IMR-90 (cell line): ENCODE measurements at regions of chr15 and their contacts with region 1.

Region 1: DNA sequence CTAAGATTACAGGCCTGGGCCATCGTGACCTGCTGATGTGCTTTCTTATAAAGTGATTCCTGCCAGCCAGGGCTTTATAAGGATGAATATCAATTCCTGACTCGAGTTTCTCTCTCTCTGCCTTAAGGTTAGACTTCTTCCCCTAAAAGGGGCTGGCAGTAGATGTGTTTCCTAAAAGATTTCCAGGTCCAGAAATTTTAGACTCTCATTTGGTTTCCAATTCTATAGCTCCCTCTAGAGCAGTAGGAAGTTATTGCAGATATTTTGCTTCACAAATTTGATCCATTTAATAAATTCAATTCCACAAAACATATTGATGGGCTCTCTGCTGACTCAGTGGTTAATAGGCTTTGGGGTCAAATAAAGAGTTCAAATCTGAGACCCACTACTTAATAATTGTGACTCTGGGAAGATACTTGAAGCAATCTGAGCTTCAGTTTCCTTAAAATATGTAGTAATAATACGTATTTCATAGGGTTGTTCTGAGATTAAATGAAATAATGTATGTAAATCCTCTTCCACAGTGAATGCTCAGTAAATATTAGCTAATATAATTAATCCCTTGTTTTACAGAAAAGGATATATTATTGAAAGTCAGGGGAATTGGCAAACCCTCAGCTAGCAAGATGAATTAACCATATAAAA is 2.1 kb downstream of the TRIM69 start:
- DNase-seq: peak; percentile 65
- ATAC-seq: peak; percentile 71
- H3K4me3 ChIP-seq: no peak overlapping the region
- H3K27ac ChIP-seq: no peak overlapping the region
- H3K4me1 ChIP-seq: peaks cover 6% of the 10 kb centered on the region
- H3K27me3 ChIP-seq: no peaks in the 10 kb centered on the region
- CTCF ChIP-seq: peak; percentile 86
- POLR2A ChIP-seq: 0 out of 2 replicates have a peak, but pooled peaks have one; percentile 25
- RAD21 ChIP-seq: peak; percentile 86

Region 2: GRCh38 chr15:44573386-44573785 is 165.1 kb before region 1 on chr15:
- CTCF ChIA-PET with region 1: interaction called, 5 read pairs
- POLR2A ChIA-PET with region 1: no interaction called
- dilution Hi-C with region 1: no loop called
- in situ Hi-C with region 1: no loop called
- intact Hi-C with region 1: loop called (anchors 1 kb)
- DNase-seq: peak; percentile 10
- ATAC-seq: no peak
- H3K4me3 ChIP-seq: no peak overlapping the region
- H3K27ac ChIP-seq: no peak overlapping the region
- H3K4me1 ChIP-seq: no peaks in the 10 kb centered on the region
- H3K27me3 ChIP-seq: no peaks in the 10 kb centered on the region
- CTCF ChIP-seq: no peak
- POLR2A ChIP-seq: no peak
- RAD21 ChIP-seq: no peak

Region 3: DNA sequence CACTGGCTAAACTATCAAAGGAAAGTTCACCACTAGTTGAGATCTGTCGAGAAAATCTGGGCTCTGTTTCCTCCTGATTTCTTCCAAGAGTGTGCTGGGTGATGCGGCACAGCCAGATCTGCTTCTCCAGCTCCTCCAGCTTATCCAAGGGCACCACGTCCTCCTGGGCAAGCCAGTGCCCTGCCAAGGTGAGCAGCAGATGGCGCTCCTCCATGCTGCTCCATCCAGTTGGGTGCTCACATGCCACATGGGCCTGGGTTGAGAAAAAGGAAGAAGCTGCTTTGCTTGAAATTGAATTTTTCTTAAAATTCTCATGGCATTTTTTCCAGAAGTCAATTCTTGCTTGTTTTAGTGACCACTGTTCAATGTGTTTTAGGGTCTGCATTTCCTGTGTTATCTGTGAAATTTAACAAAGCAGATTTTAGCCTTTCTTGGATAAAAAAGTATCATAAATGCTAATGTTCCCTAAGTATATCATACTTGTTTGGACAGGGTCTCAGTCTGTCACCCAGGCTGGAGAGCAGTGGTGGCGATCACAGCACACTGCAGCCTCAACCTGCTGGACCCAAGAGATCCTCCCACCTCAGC is 154.2 kb before region 1 on chr15:
- CTCF ChIA-PET with region 1: no interaction called
- POLR2A ChIA-PET with region 1: no interaction called
- dilution Hi-C with region 1: no loop called
- in situ Hi-C with region 1: loop called (anchors 5 kb)
- intact Hi-C with region 1: no loop called
- DNase-seq: no peak
- ATAC-seq: peak; percentile 65; the same call in 1 of the 2 replicates
- H3K4me3 ChIP-seq: no peak overlapping the region
- H3K27ac ChIP-seq: no peak overlapping the region
- H3K4me1 ChIP-seq: no peaks in the 10 kb centered on the region
- H3K27me3 ChIP-seq: no peaks in the 10 kb centered on the region
- CTCF ChIP-seq: peak; percentile 30
- POLR2A ChIP-seq: no peak
- RAD21 ChIP-seq: no peak

Region 4: GRCh38 chr15:44593042-44593736 is 145.3 kb before region 1 on chr15:
- CTCF ChIA-PET with region 1: no interaction called
- POLR2A ChIA-PET with region 1: no interaction called
- dilution Hi-C with region 1: no loop called
- in situ Hi-C with region 1: no loop called
- intact Hi-C with region 1: loop called (anchors 5 kb)
- DNase-seq: no peak
- ATAC-seq: peak; percentile 63
- H3K4me3 ChIP-seq: no peak overlapping the region
- H3K27ac ChIP-seq: no peak overlapping the region
- H3K4me1 ChIP-seq: peaks cover 5% of the 10 kb centered on the region
- H3K27me3 ChIP-seq: no peaks in the 10 kb centered on the region
- CTCF ChIP-seq: peak; percentile 50
- POLR2A ChIP-seq: no peak
- RAD21 ChIP-seq: no peak; the same call in 1 of the 2 replicates

Region 5: GRCh38 chr15:44663409-44664308 is 74.8 kb before region 1 on chr15 and contains the start of gene SPG11:
- CTCF ChIA-PET with region 1: interaction called, 19 read pairs
- POLR2A ChIA-PET with region 1: interaction called, 7 read pairs
- dilution Hi-C with region 1: no loop called
- in situ Hi-C with region 1: loop called (anchors 5 kb)
- intact Hi-C with region 1: loop called (anchors 1 kb)
- DNase-seq: peak; percentile 97
- ATAC-seq: peak; percentile 97
- H3K4me3 ChIP-seq: peak within 1 kb of the TSS; percentile 60
- H3K27ac ChIP-seq: peak within 1 kb of the TSS; percentile 73
- H3K4me1 ChIP-seq: 0 out of 2 replicates have a peak, but pooled peaks cover 3% of the 10 kb centered on the region
- H3K27me3 ChIP-seq: peaks cover 5% of the 10 kb centered on the region
- CTCF ChIP-seq: peak; percentile 98
- POLR2A ChIP-seq: peak; percentile 83
- RAD21 ChIP-seq: peak; percentile 93
- total RNA-seq, gene SPG11: 32.6 and 33.1 TPM in 2 replicates

Region 6: DNA sequence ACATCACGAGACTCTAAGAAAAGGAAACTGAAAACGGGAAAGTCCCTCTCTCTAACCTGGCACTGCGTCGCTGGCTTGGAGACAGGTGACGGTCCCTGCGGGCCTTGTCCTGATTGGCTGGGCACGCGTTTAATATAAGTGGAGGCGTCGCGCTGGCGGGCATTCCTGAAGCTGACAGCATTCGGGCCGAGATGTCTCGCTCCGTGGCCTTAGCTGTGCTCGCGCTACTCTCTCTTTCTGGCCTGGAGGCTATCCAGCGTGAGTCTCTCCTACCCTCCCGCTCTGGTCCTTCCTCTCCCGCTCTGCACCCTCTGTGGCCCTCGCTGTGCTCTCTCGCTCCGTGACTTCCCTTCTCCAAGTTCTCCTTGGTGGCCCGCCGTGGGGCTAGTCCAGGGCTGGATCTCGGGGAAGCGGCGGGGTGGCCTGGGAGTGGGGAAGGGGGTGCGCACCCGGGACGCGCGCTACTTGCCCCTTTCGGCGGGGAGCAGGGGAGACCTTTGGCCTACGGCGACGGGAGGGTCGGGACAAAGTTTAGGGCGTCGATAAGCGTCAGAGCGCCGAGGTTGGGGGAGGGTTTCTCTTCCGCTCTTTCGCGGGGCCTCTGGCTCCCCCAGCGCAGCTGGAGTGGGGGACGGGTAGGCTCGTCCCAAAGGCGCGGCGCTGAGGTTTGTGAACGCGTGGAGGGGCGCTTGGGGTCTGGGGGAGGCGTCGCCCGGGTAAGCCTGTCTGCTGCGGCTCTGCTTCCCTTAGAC is 26.9 kb before region 1 on chr15 and contains the start of gene B2M:
- CTCF ChIA-PET with region 1: interaction called, 16 read pairs
- POLR2A ChIA-PET with region 1: interaction called, 7 read pairs
- dilution Hi-C with region 1: no loop called
- in situ Hi-C with region 1: no loop called
- intact Hi-C with region 1: no loop called
- DNase-seq: peak; percentile 96
- ATAC-seq: peak; percentile 95
- H3K4me3 ChIP-seq: peak within 1 kb of the TSS; percentile 83
- H3K27ac ChIP-seq: peak within 1 kb of the TSS; percentile 87
- H3K4me1 ChIP-seq: 0 out of 2 replicates have a peak, but pooled peaks cover 2% of the 10 kb centered on the region
- H3K27me3 ChIP-seq: no peaks in the 10 kb centered on the region
- CTCF ChIP-seq: no peak
- POLR2A ChIP-seq: peak; percentile 100
- RAD21 ChIP-seq: no peak
- total RNA-seq, gene B2M: 716 and 895 TPM in 2 replicates